GM10248 (cell line): ENCODE measurements at regions of chrX and their contacts with region 1.

Region 1: GRCh38 chrX:57821703-57822375 is 88.4 kb downstream of the ZXDA start:
- DNase-seq: peak; percentile 23
- CTCF ChIP-seq: peak; percentile 50

Region 2: GRCh38 chrX:57915680-57916079 is 93.8 kb after region 1 on chrX:
- CTCF ChIA-PET with region 1: interaction called, 11 read pairs
- POLR2A ChIA-PET with region 1: no interaction called
- DNase-seq: no peak
- CTCF ChIP-seq: no peak

Region 3: GRCh38 chrX:58025979-58026378 is 204.1 kb after region 1 on chrX:
- CTCF ChIA-PET with region 1: interaction called, 30 read pairs
- POLR2A ChIA-PET with region 1: no interaction called
- DNase-seq: peak; percentile 17
- CTCF ChIP-seq: peak; percentile 53